Spleen (tissue), 13 donors: ENCODE measurements at regions of chrX and their contacts with region 1.

Region 1: GRCh38 chrX:106791495-106791894 is 11.0 kb upstream of the TBC1D8B start:
- DNase-seq: no peak
- H3K4me3 ChIP-seq: no peak overlapping the region
- H3K27ac ChIP-seq: no peak overlapping the region
- H3K4me1 ChIP-seq: no peaks in the 10 kb centered on the region
- H3K27me3 ChIP-seq: no peaks in the 10 kb centered on the region
- CTCF ChIP-seq: peak in 3 of 11 experiments; percentile 13 to 22 (median 15)
- POLR2A ChIP-seq: no peak

Region 2: DNA sequence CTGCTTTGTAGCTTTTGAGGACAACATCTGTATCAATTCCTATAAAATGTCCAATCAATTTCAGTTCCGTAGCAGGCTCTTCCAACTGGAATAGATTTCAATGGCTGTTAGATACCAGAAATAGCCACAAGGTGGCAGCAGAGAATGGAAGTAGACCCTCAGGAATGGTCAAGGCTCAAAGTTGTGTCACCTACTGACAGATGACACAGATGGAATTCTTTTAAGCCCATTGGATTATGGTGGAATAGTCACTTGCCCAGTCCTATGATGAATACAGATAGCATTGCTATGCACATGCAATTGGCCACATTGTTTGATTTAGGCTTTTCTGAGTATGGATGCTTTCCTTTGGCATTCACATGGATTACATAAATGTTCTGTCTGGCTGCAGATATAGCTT is 310.2 kb before region 1 on chrX:
- intact Hi-C with region 1: loop called (anchors 10 kb)
- DNase-seq: no peak
- H3K4me3 ChIP-seq: no peak overlapping the region
- H3K27ac ChIP-seq: no peak overlapping the region
- H3K4me1 ChIP-seq: no peaks in the 10 kb centered on the region
- H3K27me3 ChIP-seq: no peaks in the 10 kb centered on the region
- CTCF ChIP-seq: peak; percentile 19 to 86 (median 67)
- POLR2A ChIP-seq: no peak

Region 3: DNA sequence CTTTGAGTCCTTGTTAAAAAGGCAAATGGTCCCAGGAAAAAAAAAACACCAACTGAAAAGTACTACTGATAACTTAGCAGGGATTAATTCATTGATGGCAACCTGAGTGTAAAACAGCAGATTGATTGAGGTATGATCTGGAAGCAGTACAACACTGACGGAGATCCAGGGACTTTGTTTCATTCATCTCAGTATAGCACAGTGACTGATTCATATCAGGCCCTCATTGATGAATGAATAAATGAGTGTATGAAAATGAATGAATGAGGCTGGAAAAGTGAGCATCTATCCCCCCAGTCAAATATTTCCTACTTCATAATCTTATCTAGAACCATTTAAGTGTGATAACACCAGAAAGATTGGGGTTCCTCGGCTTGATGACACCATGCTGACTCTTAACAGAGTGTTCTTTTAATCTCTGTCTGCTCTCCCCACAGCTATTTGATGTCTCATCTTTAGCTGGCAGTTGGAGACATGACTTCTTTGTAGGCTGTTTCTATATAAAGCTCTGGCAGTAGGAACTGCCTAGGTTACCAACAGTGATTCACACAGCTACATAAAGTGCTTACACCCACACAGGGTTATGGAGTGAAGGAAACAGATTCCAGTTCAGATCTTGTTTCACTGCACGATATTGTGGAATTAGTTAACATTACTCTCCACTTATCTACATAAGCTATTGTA is 83.6 kb before region 1 on chrX:
- intact Hi-C with region 1: no loop called
- DNase-seq: no peak
- H3K4me3 ChIP-seq: no peak overlapping the region
- H3K27ac ChIP-seq: no peak overlapping the region
- H3K4me1 ChIP-seq: no peaks in the 10 kb centered on the region
- H3K27me3 ChIP-seq: peaks cover 0 to 11% (median 0%) of the 10 kb centered on the region in 7 donors
- CTCF ChIP-seq: no peak
- POLR2A ChIP-seq: no peak